ENCODE measurements at regions of chr5 and their contacts with region 1.

Region 1: DNA sequence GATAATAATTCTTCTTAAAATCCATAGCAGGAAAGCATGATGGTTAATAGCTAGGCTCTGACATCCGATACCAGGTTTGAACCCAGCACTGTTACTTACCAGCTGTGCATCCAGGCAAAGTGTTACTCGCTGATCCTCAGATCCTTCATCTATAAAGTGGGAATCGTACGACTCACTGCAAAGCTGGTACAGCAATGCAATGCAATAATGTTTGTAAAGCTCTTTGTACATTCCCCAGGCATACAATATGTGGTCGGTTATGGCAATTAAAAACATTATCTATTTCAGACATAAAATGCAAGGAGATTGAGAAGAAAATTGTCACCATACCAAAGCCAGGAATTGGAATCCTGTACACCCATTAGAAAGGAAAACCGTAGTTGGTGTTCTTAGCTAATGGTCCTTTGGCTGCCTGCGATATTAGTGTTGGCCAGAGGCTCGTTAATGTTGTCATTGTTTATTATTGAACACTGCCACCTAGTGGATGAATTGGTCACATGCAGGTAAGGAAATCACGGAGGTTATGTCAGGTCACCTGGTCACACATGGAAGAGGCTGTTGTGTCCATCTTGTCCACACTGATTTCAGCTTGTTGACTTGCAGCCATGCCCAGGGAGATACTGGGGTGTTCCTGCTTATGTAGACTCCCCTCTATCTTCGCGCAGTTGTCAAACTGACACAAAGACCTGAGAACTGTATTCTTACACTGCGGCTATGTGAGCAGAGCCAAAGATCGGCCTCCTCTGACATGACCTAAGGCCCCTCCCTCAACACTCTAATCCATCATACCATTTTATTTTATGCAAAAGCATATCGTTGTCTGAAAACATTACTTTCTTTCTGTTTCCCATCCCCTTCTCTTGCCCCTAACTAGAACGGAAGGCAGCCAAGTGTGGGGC is 87.5 kb upstream of the PPP2R2B start:
- DNase-seq: peak; percentile 14 to 83
- H3K4me3 ChIP-seq: no peak overlapping the region
- H3K27ac ChIP-seq: no peak overlapping the region
- H3K4me1 ChIP-seq: peaks cover 3 to 14% of the 10 kb centered on the region in 2 donors
- H3K27me3 ChIP-seq: no peaks in the 10 kb centered on the region
- CTCF ChIP-seq: peak; percentile 66 to 89 (median 86)

Region 2: GRCh38 chr5:146533260-146533857 is 432.7 kb before region 1 on chr5:
- intact Hi-C with region 1: loop called (anchors 2 kb)
- DNase-seq: peak in 1 of 2 donors; percentile 76
- H3K4me3 ChIP-seq: no peak overlapping the region
- H3K27ac ChIP-seq: no peak overlapping the region
- H3K4me1 ChIP-seq: no peaks in the 10 kb centered on the region
- H3K27me3 ChIP-seq: no peaks in the 10 kb centered on the region
- CTCF ChIP-seq: peak; percentile 56 to 87 (median 79)

Region 3: DNA sequence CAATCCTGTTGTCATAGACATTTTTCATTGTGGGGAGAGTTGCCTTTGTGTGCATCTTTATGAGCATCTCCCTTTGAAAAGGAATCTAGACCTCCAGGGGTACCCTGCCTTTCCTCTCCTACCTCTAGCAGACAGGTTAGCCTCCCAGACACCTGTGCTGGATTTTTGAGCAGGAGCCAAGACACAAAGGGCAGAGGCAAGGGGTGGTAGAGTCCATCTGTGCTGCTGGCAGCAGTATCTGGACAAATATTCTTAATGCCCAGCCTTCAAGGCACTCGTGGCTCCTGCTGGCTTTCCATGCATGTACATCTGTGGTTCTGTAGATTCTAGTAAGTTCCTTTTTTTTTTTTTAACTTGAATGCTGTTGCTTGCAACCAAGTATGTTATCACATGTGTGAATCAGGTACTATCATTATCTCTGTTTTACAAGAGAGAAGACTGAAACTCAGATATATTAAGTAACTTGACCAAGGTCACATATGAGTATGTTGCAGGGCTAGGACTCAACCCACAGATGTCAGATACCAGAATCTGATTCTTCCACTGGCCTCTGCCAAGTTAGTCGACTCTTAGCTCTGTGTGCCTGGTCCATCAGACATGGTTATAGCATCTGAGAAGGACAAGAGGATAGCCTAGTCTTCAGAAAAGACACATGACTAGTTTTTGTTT is 417.1 kb before region 1 on chr5:
- intact Hi-C with region 1: no loop called
- DNase-seq: no peak
- H3K4me3 ChIP-seq: no peak overlapping the region
- H3K27ac ChIP-seq: no peak overlapping the region
- H3K4me1 ChIP-seq: no peaks in the 10 kb centered on the region
- H3K27me3 ChIP-seq: no peaks in the 10 kb centered on the region
- CTCF ChIP-seq: no peak

Region 4: GRCh38 chr5:146662229-146662628 is 303.8 kb before region 1 on chr5:
- intact Hi-C with region 1: loop called (anchors 1 kb)
- DNase-seq: no peak
- H3K4me3 ChIP-seq: no peak overlapping the region
- H3K27ac ChIP-seq: no peak overlapping the region
- H3K4me1 ChIP-seq: no peaks in the 10 kb centered on the region
- H3K27me3 ChIP-seq: no peaks in the 10 kb centered on the region
- CTCF ChIP-seq: peak; percentile 4 to 45 (median 37)

Region 5: DNA sequence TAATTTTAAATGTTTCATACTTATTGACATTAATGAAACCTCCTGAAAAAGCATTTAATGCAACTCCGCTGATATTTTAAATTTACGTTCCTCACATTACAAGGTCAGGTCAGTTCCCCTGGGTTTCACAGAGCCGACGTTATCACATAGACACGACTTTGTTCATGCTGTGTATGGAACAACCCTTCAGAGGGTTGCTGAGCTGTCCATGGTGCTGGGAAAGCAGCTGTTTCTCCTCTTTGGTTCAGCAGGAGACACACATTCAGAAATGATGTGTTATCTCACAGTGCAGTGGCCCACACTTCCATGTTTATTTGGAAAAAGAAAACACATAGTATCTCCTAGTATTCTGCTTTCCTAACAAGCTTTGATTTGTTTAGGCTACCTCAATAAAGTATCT is 141.0 kb before region 1 on chr5:
- intact Hi-C with region 1: loop called (anchors 10 kb)
- DNase-seq: no peak
- H3K4me3 ChIP-seq: no peak overlapping the region
- H3K27ac ChIP-seq: no peak overlapping the region
- H3K4me1 ChIP-seq: no peaks in the 10 kb centered on the region
- H3K27me3 ChIP-seq: no peaks in the 10 kb centered on the region
- CTCF ChIP-seq: no peak

Region 6: DNA sequence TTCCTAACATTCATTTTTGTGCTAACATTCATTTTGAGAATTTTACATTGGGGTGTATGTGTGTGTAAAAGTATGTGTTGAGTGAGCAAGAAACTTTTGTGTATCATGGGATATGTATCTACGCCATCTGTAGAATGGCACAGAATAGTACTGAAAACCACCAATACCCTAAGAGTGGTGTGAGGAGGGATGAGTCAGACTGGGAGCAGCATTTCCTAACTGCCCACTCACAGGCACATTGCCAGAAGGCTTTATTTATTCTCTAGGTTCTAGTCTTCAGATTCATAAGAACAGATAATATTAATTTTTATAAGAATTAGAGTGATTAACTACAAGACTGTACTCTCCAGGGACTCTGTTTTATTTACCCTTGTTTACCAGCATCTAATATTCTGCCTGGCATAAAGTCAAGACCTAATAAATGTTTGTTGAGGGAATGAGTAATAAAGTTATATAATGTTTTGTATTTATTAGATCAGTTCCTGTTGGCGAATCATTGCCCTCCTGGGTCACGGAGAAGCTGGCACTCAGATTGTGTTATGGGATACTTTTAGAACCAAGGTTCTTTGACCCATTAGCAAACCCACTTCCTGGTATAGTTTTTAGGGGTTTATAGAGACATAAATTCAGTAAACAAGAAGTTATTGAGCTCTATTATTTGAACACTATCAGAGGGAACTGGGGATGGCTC is 71.7 kb after region 1 on chr5:
- intact Hi-C with region 1: no loop called
- DNase-seq: no peak
- H3K4me3 ChIP-seq: no peak overlapping the region
- H3K27ac ChIP-seq: no peak overlapping the region
- H3K4me1 ChIP-seq: no peaks in the 10 kb centered on the region
- H3K27me3 ChIP-seq: no peaks in the 10 kb centered on the region
- CTCF ChIP-seq: no peak

Region 7: DNA sequence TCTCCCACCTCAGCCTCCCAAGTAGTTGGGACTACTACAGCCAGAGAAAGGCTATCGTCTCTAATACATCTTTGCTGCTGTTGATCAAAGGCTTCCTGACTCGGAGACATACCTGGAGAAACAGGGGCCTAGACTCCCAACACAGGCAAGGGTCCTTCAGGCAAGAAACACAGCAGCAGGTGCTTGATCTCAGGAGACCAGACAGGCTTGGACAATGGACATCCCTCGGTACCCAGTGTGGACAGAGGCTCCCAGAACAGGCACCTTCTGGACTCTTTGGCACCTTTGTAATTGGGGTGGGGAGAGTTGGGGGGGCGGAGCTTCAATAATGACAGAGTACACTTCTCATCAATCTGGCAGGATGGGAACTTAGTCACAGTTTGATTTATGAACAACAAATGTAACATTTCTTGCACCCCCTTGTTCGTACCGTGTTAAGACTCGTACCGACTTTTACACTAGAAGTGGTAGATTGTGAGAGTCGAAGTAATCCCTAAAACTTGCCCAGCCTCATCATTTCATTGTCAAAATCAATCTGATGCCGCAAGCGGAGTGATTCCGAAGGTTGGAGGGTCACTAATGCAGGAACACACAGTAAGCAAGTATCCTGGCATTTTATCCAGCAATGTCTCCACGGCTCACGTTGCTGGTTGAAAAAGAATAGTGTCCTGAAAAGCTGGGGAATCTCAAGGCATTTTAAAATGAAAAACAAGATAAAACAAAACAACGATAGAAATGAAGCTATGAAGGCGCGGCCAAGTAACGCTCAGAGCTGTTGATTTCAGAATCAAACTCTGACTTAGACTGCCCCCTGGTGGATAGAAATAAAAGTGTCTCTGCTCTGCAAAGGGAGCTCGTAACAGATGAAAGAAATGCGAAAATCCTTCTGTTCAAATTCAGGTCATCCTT is 222.4 kb after region 1 on chr5:
- intact Hi-C with region 1: loop called (anchors 5 kb)
- DNase-seq: no peak
- H3K4me3 ChIP-seq: peak overlapping the region in 1 of 2 donors; percentile 44
- H3K27ac ChIP-seq: no peak overlapping the region
- H3K4me1 ChIP-seq: no peaks in the 10 kb centered on the region
- H3K27me3 ChIP-seq: no peaks in the 10 kb centered on the region
- CTCF ChIP-seq: peak; percentile 65 to 87 (median 80)

Region 8: DNA sequence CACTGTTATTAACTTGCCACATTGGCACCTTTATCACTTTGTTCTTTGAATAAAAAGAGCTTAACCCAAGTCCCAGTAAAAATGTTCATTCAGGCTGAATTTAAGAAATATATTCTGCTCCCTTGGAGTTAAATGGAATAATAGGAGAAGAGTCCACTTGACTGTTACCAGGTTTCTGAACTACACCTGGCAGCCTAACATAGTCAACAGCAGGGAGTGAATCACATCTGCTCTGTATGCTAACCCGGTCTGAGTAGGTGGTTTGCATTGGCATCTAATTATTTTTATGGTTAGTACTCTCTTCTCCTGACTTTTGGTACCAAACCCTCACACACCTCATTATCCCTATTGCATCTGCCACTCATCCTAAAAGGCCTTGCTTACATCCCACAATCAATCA is 355.6 kb after region 1 on chr5:
- intact Hi-C with region 1: no loop called
- DNase-seq: no peak
- H3K4me3 ChIP-seq: no peak overlapping the region
- H3K27ac ChIP-seq: no peak overlapping the region
- H3K4me1 ChIP-seq: no peaks in the 10 kb centered on the region
- H3K27me3 ChIP-seq: no peaks in the 10 kb centered on the region
- CTCF ChIP-seq: no peak